ENCODE measurements at regions of chrX and their contacts with region 1.

Region 1: GRCh38 chrX:13750204-13750603 is 15.7 kb downstream of the OFD1 start:
- DNase-seq: peak in 2 of 4 experiments; percentile 25 to 51
- ATAC-seq: peak; percentile 85
- H3K4me3 ChIP-seq: no peak overlapping the region
- H3K27ac ChIP-seq: no peak overlapping the region
- H3K4me1 ChIP-seq: no peaks in the 10 kb centered on the region
- H3K27me3 ChIP-seq: no peaks in the 10 kb centered on the region
- CTCF ChIP-seq: peak; percentile 23 to 62 (median 61); a peak in 5 of 6 replicates
- EP300 ChIP-seq: no peak
- POLR2A ChIP-seq: no peak
- RAD21 ChIP-seq: peak in 1 of 2 experiments; percentile 51; a peak in 2 of 4 replicates

Region 2: GRCh38 chrX:13506574-13506973 is 243.6 kb before region 1 on chrX:
- CTCF ChIA-PET with region 1: no interaction called
- POLR2A ChIA-PET with region 1: no interaction called
- in situ Hi-C with region 1: no loop called
- intact Hi-C with region 1: loop called (anchors 2 kb)
- DNase-seq: peak; percentile 54 to 66 (median 58)
- ATAC-seq: no peak
- H3K4me3 ChIP-seq: no peak overlapping the region
- H3K27ac ChIP-seq: no peak overlapping the region
- H3K4me1 ChIP-seq: no peaks in the 10 kb centered on the region
- H3K27me3 ChIP-seq: no peaks in the 10 kb centered on the region
- CTCF ChIP-seq: peak; percentile 64 to 84 (median 67)
- EP300 ChIP-seq: no peak
- POLR2A ChIP-seq: no peak
- RAD21 ChIP-seq: peak; percentile 86 to 88

Region 3: GRCh38 chrX:13658602-13659001 is 91.6 kb before region 1 on chrX:
- CTCF ChIA-PET with region 1: interaction called, 19 read pairs
- POLR2A ChIA-PET with region 1: no interaction called
- in situ Hi-C with region 1: loop called (anchors 5 kb)
- intact Hi-C with region 1: loop called (anchors 1 kb)
- DNase-seq: peak; percentile 12 to 58 (median 22)
- ATAC-seq: peak; percentile 76
- H3K4me3 ChIP-seq: no peak overlapping the region
- H3K27ac ChIP-seq: no peak overlapping the region
- H3K4me1 ChIP-seq: peaks cover 0 to 3% of the 10 kb centered on the region in 2 experiments; a peak in 2 of 5 replicates
- H3K27me3 ChIP-seq: no peaks in the 10 kb centered on the region
- CTCF ChIP-seq: peak; percentile 52 to 72 (median 55); a peak in 5 of 6 replicates
- EP300 ChIP-seq: no peak
- POLR2A ChIP-seq: no peak
- RAD21 ChIP-seq: peak; percentile 81 to 88